Posterior cingulate gyrus (tissue), 11 donors: ENCODE measurements at regions of chr6 and their contacts with region 1.

Region 1: DNA sequence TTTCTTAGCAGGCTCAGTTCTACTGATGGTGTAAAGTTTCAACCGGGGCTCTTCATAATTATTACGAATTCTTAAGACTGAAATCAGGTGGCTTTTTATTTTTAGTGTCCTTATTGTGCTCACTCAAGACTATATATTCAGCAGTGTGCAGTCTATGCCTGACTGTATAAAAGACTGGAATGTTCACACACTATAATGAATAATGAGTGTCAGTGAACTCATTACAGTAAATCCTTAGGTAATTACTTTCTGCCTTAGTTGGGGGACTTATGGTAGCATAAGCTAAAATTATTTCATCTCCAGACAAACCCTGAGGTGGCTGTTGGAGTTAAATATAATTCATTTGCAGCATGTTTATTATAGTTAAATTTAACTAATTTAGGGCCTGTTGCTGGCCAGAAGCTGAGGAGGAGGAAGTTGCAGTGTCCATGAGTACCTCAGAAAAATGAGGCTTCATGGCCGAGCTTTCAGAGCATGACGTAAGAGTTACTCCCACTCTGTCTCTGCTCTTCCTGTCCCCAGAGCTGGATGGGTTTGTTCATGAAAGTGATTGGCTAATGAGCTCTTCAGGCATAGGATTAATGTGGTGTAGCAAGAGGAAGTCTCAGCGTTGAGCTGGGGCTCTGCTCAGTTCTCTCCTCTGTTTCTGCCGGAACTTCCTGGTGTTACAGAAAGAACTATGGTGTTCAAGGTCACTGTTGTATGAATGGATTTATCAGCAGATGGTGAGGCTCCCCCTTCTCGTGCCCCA is 335.7 kb downstream of the NRN1 start:
- DNase-seq: peak in 3 of 10 donors; percentile 27 to 81 (median 39)

Region 2: DNA sequence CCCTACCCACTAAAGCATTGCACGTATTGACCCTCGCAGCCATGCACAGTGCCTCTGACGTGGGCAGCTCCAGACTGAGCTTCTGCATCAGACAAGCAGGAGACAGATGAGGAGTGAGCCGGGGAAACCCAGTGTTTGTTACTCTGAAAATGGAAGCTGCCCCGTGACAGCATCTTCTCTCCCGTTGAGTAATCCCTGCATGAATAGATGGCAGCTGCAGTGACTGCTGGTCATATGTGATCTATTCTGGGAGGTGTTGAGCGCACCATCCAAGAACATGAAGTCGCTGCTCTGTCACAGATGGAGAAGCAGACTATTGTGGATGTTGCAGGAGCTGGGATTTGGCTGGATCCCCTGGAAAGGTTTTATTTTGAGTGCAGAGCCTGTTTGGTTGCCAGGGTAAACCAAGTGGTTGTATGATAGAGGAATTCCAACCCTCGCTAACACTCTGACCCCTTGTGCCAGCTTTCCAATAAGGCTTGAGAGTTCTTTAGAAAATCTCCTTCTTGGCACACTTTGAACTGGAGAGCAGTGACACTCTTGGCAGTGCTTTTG is 93.5 kb after region 1 on chr6:
- intact Hi-C with region 1: loop called (anchors 5 kb)
- DNase-seq: peak; percentile 21 to 93 (median 70)